ENCODE measurements at regions of chr20 and their contacts with region 1.

Region 1: DNA sequence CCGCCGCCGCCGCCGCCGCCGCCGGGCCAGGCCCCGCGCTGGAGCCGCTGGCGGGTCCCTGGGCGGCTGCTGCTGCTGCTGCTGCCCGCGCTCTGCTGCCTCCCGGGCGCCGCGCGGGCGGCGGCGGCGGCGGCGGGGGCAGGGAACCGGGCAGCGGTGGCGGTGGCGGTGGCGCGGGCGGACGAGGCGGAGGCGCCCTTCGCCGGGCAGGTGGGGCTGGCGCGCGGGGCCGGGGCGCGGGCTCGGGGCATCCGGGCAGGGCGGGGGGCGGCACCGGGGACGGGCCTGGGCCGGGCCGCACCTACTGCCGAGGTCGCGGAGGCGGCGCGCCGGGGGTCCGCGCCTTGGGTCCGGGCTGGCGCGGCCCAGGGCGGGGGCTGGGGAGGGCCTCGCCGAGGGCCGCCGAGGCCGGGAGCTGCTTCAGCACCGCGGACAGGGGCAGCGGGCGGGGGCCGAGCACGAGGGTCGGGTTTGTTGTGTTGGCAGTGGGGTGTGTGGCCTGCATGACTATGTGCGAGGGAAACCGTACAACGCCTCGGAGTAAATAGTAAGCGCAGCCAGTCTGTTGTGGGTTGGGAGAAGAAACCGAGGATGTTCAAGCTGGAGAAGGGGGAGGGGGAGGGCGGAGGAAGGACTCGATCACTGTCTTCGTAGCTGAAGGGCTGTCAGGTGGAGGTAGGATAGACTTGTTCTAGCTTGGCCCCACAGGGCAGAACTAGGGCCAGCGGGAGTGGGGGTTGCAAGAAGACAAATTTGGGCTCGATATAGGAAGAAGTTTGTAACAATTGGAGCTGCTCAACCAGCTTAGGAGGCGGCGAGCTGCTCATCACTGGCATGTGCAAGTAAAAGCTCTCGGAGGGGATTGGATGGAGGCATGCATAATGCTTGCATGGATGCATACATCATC is 538 bp downstream of the MMP24 start:
- DNase-seq: no peak
- ATAC-seq: peak; percentile 81
- H3K4me3 ChIP-seq: peak overlapping the region; percentile 16 to 45
- H3K27ac ChIP-seq: no peak overlapping the region
- H3K4me1 ChIP-seq: no peaks in the 10 kb centered on the region
- H3K27me3 ChIP-seq: peaks cover 17% of the 10 kb centered on the region
- CTCF ChIP-seq: no peak

Region 2: DNA sequence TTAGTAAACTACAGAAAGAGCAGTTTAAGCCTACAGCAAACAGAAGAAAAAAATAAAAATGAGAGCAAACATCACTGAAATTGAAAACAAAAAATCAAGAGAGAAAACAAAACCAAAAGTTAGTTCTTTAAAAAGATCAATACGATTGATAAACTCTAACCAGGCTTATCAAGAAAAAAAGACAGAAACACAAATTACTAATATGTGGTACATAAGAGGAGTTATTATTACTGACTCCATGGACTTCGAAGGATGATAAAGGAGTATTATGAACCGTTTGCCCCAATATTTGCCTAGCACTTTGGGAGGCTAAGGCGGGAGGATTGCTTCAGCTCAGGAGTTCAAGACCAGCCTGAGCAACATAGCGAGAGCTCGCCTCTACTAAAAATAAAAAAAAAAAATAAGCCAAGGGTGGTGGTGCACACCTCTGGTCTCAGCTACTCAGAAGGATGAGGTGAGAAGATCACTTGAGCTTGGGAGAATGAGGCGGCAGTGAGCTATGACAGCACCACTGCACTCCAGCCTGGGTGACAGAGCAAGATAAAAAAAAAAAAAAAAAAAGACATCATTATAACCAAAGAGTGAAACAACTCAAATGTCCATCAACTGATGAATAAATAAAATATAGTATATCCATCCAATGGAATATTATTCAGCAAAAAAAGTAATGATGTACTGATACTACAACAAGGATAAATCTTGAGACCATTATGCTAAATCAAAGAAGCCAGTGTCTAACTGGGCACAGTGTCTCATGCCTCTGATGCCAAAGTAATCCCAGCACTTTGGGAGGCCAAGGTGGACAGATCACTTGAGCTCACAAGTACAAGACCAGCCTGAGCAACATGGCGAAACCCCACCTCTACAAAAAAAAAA is 147.3 kb before region 1 on chr20:
- CTCF ChIA-PET with region 1: interaction called, 10 read pairs
- POLR2A ChIA-PET with region 1: no interaction called
- in situ Hi-C with region 1: no loop called
- intact Hi-C with region 1: no loop called
- DNase-seq: no peak
- ATAC-seq: no peak
- H3K4me3 ChIP-seq: no peak overlapping the region
- H3K27ac ChIP-seq: no peak overlapping the region
- H3K4me1 ChIP-seq: no peaks in the 10 kb centered on the region; the same call in 1 of the 2 replicates
- H3K27me3 ChIP-seq: no peaks in the 10 kb centered on the region
- CTCF ChIP-seq: no peak

Region 3: GRCh38 chr20:35252037-35252461 is 25.0 kb after region 1 on chr20:
- CTCF ChIA-PET with region 1: no interaction called
- POLR2A ChIA-PET with region 1: no interaction called
- in situ Hi-C with region 1: no loop called
- intact Hi-C with region 1: no loop called
- DNase-seq: no peak
- ATAC-seq: no peak
- H3K4me3 ChIP-seq: no peak overlapping the region
- H3K27ac ChIP-seq: no peak overlapping the region
- H3K4me1 ChIP-seq: no peaks in the 10 kb centered on the region
- H3K27me3 ChIP-seq: no peaks in the 10 kb centered on the region
- CTCF ChIP-seq: no peak

Region 4: GRCh38 chr20:35277531-35278395 is 50.7 kb after region 1 on chr20 and contains the start of gene MMP24OS:
- CTCF ChIA-PET with region 1: no interaction called
- POLR2A ChIA-PET with region 1: no interaction called
- in situ Hi-C with region 1: no loop called
- intact Hi-C with region 1: no loop called
- DNase-seq: peak; percentile 64
- ATAC-seq: peak; percentile 90
- H3K4me3 ChIP-seq: peak within 1 kb of the TSS; percentile 87 to 88
- H3K27ac ChIP-seq: peak within 1 kb of the TSS; percentile 95
- H3K4me1 ChIP-seq: peaks cover 37% of the 10 kb centered on the region
- H3K27me3 ChIP-seq: no peaks in the 10 kb centered on the region
- CTCF ChIP-seq: no peak
- total RNA-seq, gene MMP24OS: 83.8 TPM

Measured in Panc1 (cell line).